ENCODE measurements at regions of chr20 and their contacts with region 1.

Region 1: GRCh38 chr20:431012-431904 is 23.2 kb downstream of the RBCK1 start:
- DNase-seq: peak; percentile 75
- ATAC-seq: peak; percentile 57
- H3K4me3 Mint-ChIP-seq: no peak overlapping the region
- H3K27ac Mint-ChIP-seq: no peak overlapping the region
- H3K4me1 Mint-ChIP-seq: peaks cover 23% of the 10 kb centered on the region
- H3K27me3 Mint-ChIP-seq: peaks cover 40% of the 10 kb centered on the region
- CTCF ChIP-seq: peak; percentile 37; the same call in 1 of the 2 replicates

Region 2: GRCh38 chr20:362271-363254 is 68.7 kb before region 1 on chr20:
- CTCF ChIA-PET with region 1: interaction called, 38 read pairs
- POLR2A ChIA-PET with region 1: interaction called, 3 read pairs
- DNase-seq: peak; percentile 57
- ATAC-seq: peak; percentile 71
- H3K4me3 Mint-ChIP-seq: no peak overlapping the region
- H3K27ac Mint-ChIP-seq: no peak overlapping the region
- H3K4me1 Mint-ChIP-seq: peaks cover 23% of the 10 kb centered on the region
- H3K27me3 Mint-ChIP-seq: peaks cover 3% of the 10 kb centered on the region; the same call in 1 of the 2 replicates
- CTCF ChIP-seq: peak; percentile 28; the same call in 1 of the 2 replicates

Region 3: DNA sequence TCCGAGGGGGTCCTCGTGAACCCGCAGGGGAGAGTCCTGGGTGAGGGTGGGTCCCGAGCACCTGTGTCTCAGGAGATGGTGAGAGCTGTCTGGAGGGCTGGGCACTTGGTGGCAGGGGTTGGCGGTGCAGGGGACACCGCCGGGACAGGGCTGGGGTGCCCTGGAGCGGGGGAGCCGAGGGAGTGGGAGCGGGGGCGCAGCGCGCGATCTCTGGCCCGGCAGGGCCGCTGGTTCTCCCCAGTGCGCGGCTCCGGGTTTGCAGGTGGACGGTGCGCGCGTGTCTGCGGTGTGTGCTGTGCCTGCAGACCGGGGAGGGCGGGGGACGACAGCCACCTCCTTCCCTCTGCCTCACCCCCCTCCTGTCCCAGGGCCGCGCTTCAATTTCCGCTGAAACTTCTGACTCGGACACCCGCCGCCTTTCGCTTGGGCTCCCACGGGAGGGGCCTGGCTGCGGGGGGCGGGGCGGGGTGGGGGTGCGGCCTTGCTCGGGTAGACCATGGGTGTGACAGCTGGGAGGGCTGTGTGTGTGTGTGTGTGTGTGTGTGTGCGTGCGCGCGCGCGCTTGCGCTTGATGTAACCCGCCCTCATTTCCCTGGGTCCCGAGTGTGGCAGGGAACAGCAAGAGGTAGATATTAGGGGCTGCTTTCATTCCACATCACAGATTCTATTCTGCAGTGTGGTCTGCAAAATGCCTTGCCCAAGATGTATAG is 49.5 kb before region 1 on chr20:
- CTCF ChIA-PET with region 1: interaction called, 15 read pairs
- POLR2A ChIA-PET with region 1: interaction called, 3 read pairs
- DNase-seq: peak; percentile 50
- ATAC-seq: peak; percentile 49
- H3K4me3 Mint-ChIP-seq: peak overlapping the region; percentile 66
- H3K27ac Mint-ChIP-seq: no peak overlapping the region
- H3K4me1 Mint-ChIP-seq: no peaks in the 10 kb centered on the region
- H3K27me3 Mint-ChIP-seq: peaks cover 25% of the 10 kb centered on the region
- CTCF ChIP-seq: no peak

Region 4: GRCh38 chr20:407133-407952 is 23.9 kb before region 1 on chr20:
- CTCF ChIA-PET with region 1: interaction called, 23 read pairs
- POLR2A ChIA-PET with region 1: interaction called, 5 read pairs
- DNase-seq: peak; percentile 89
- ATAC-seq: peak; percentile 93
- H3K4me3 Mint-ChIP-seq: peak overlapping the region; percentile 86
- H3K27ac Mint-ChIP-seq: peak overlapping the region; percentile 97
- H3K4me1 Mint-ChIP-seq: peaks cover 21% of the 10 kb centered on the region
- H3K27me3 Mint-ChIP-seq: peaks cover 8% of the 10 kb centered on the region; the same call in 1 of the 2 replicates
- CTCF ChIP-seq: no peak